Activated CD4-positive, alpha-beta memory T cell treated with anti-CD3 and anti-CD28 coated beads for 36 hours (primary cell): ENCODE measurements at regions of chr14 and their contacts with region 1.

Region 1: DNA sequence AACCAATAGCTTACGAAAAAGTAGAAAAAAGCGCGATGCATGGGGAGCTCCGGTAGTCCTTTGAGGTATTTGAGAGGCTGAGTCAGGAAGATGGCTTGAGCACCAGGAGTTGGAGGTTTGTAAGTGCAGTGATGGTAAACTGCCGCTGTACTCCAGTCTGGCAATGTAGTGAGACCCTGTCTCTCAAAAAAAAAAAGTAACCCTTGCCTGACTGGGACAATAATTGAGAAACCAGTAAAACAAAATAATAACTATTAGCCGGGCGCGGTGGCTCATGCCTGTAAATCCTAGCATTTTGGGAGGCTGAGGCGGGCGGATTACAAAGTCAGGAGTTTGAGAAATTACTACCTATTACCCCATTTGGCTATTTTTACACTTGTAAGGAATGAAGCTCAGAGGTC is 632 bp upstream of the ACOT2 start:
- DNase-seq: peak; percentile 58
- H3K4me3 Mint-ChIP-seq: peak overlapping the region; percentile 84
- H3K27ac Mint-ChIP-seq: peak overlapping the region; percentile 99
- H3K4me1 Mint-ChIP-seq: peaks cover 42% of the 10 kb centered on the region
- H3K27me3 Mint-ChIP-seq: no peaks in the 10 kb centered on the region

Region 2: DNA sequence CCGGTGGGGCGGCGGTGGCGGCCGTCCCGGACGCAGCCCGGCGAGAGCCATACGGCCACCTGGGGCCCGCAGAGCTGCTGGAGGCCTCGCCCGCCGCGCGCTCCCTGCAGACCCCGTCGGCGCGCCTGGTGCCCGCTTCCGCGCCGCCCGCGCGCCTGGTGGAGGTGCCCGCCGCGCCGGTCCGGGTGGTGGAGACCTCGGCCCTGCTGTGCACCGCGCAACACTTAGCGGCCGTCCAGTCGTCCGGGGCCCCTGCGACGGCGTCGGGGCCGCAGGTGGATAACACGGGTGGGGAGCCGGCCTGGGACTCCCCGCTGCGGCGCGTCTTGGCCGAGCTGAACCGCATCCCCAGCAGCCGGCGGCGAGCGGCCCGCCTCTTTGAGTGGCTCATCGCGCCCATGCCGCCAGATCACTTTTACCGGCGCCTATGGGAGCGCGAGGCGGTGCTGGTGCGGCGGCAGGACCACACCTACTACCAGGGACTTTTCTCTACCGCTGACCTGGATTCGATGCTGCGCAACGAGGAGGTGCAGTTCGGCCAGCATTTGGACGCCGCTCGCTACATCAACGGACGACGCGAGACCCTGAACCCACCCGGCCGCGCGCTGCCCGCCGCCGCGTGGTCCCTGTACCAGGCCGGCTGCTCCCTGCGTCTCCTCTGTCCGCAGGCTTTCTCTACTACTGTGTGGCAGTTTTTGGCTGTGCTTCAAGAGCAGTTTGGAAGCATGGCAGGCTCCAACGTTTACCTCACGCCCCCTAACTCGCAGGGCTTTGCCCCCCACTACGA is 76.9 kb before region 1 on chr14:
- CTCF ChIA-PET with region 1: interaction called, 7 read pairs
- POLR2A ChIA-PET with region 1: interaction called, 22 read pairs
- intact Hi-C with region 1: loop called (anchors 1 kb)
- DNase-seq: peak; percentile 85
- H3K4me3 Mint-ChIP-seq: peak overlapping the region; percentile 77
- H3K27ac Mint-ChIP-seq: peak overlapping the region; percentile 74
- H3K4me1 Mint-ChIP-seq: peaks cover 43% of the 10 kb centered on the region
- H3K27me3 Mint-ChIP-seq: no peaks in the 10 kb centered on the region

Region 3: DNA sequence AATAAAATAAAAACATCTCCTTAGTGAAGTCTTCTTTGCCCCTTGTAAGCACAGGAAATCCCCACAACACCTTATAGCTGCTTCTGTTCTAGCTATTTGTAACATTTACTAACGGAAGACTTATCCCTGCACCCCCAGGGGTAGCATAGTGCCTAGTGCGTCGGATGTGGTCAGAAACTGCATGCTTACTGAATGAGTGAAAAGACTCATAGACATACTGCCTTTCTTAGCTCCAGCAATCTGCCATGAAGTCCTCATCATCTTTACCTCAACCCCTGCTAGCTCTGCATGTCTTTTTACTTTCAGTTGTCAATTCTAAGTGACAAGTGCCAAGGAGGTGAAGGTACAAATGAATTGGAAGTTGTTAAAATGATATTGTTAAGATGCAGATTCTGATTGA is 64.7 kb before region 1 on chr14:
- CTCF ChIA-PET with region 1: interaction called, 115 read pairs
- POLR2A ChIA-PET with region 1: interaction called, 9 read pairs
- intact Hi-C with region 1: no loop called
- DNase-seq: peak; percentile 14
- H3K4me3 Mint-ChIP-seq: no peak overlapping the region
- H3K27ac Mint-ChIP-seq: no peak overlapping the region
- H3K4me1 Mint-ChIP-seq: no peaks in the 10 kb centered on the region
- H3K27me3 Mint-ChIP-seq: no peaks in the 10 kb centered on the region

Region 4: DNA sequence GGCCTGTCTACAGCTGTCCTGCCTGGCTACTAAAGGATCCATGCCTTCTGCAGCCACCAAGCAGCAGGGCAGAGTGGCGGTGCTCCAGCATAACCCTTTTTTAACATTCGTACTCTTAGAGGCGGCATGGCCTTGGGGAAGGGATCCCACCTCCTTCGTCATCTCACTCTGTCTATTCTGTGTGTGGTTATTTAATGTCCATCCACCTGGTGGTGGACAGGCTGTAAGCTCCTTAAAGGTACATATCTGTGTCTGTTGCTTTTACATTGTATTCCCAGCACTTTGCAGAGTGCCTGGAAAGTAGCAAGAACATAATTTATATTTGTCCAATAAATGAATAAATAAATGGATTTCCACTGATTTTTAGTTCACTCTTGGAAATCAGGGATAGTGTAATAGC is 47.2 kb before region 1 on chr14:
- CTCF ChIA-PET with region 1: interaction called, 11 read pairs
- POLR2A ChIA-PET with region 1: interaction called, 4 read pairs
- intact Hi-C with region 1: no loop called
- DNase-seq: no peak
- H3K4me3 Mint-ChIP-seq: no peak overlapping the region
- H3K27ac Mint-ChIP-seq: no peak overlapping the region
- H3K4me1 Mint-ChIP-seq: no peaks in the 10 kb centered on the region
- H3K27me3 Mint-ChIP-seq: no peaks in the 10 kb centered on the region

Region 5: GRCh38 chr14:73591690-73592448 is 23.5 kb after region 1 on chr14 and contains the start of gene ACOT4:
- CTCF ChIA-PET with region 1: interaction called, 6 read pairs
- POLR2A ChIA-PET with region 1: interaction called, 13 read pairs
- intact Hi-C with region 1: no loop called
- DNase-seq: peak; percentile 62
- H3K4me3 Mint-ChIP-seq: peak within 1 kb of the TSS; percentile 75
- H3K27ac Mint-ChIP-seq: peak within 1 kb of the TSS; percentile 42
- H3K4me1 Mint-ChIP-seq: peaks cover 15% of the 10 kb centered on the region
- H3K27me3 Mint-ChIP-seq: no peaks in the 10 kb centered on the region
- total RNA-seq, gene ACOT4: 3.2 to 3.3 TPM